ENCODE measurements at regions of chr14 and their contacts with region 1.

Region 1: GRCh38 chr14:103500148-103500990 is 22.3 kb downstream of the CKB start:
- DNase-seq: peak; percentile 87 to 98 (median 96)
- H3K4me3 ChIP-seq: no peak overlapping the region
- H3K27ac ChIP-seq: peak overlapping the region in 2 of 5 donors; percentile 19 to 48
- H3K4me1 ChIP-seq: peaks cover 0 to 16% of the 10 kb centered on the region in 2 donors
- H3K27me3 ChIP-seq: no peaks in the 10 kb centered on the region
- CTCF ChIP-seq: peak; percentile 81 to 96 (median 88)
- POLR2A ChIP-seq: no peak

Region 2: GRCh38 chr14:103333754-103334643 is 166.4 kb before region 1 on chr14 and contains the start of gene EIF5:
- intact Hi-C with region 1: loop called in 1 of 2 experiments (anchors 10 kb)
- DNase-seq: peak; percentile 99 to 100 (median 100)
- H3K4me3 ChIP-seq: peak within 1 kb of the TSS; percentile 88 to 98 (median 96)
- H3K27ac ChIP-seq: peak within 1 kb of the TSS; percentile 98 to 100 (median 99)
- H3K4me1 ChIP-seq: peaks cover 16 to 31% of the 10 kb centered on the region in 2 donors
- H3K27me3 ChIP-seq: no peaks in the 10 kb centered on the region
- CTCF ChIP-seq: peak in 4 of 6 experiments; percentile 55 to 77 (median 69)
- POLR2A ChIP-seq: peak; percentile 99 to 100
- total RNA-seq, gene EIF5: 165 to 555 (median 245) TPM

Region 3: DNA sequence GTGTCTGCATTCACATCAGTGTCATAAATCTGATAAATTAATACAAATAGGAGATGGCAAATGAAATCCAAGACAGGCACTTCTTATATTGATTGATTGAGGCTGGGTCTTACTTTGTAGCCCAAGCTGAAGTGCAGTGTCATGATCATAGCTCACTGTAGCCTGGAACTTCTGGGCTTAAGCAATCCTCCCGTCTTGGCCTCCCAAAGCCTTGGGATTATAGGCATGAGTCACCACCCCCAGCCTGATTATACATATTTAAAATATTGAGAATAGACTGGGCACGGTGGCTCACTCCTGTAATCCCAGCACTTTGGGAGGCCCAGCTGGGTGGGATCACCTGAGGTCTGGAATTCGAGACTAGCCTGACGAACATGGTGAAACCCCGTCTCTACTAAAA is 63.8 kb before region 1 on chr14:
- intact Hi-C with region 1: loop called in 1 of 2 experiments (anchors 10 kb)
- DNase-seq: no peak
- H3K4me3 ChIP-seq: no peak overlapping the region
- H3K27ac ChIP-seq: no peak overlapping the region
- H3K4me1 ChIP-seq: no peaks in the 10 kb centered on the region
- H3K27me3 ChIP-seq: no peaks in the 10 kb centered on the region
- CTCF ChIP-seq: no peak
- POLR2A ChIP-seq: no peak

Region 4: DNA sequence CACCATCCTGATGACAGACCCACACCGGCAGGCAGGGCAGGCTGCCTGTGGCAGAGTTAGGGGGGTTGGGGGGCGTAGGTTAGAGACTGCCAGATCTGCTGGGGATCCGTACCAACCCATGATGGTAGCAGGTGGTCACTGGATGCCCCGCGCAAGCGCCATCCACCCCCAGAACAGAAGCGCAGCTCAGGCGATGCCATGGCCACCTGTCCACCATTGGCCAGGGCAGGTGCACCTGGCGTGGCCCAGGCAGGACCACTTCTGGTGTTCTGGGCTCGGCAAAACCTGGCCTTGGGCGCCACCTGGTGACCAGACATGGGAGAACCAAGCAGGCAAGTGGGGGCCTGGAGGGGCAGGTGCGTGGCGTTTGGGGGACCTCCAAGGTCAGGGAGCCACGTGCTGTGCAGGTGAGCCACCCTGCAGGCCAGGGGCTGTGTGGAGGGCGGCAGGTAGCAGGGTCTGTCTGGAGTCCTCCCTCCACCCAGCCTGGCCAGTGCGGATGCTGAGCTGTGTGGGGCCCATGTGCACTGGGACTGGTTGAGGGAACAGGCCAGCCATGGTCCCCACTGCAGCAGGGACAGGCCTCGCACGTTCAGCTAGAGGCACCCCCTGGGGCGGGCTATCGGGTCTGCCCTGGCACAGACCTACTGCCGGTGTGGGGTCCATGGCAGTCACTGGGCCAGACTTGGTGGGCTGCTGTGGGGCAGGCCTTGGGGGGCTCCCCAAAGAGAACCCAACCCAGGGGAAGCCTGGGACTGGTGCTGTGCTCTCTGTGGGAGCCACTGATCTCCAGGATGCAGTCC is 46.5 kb after region 1 on chr14:
- intact Hi-C with region 1: loop called (anchors 2 to 5 kb)
- DNase-seq: peak; percentile 63 to 87 (median 73)
- H3K4me3 ChIP-seq: no peak overlapping the region
- H3K27ac ChIP-seq: no peak overlapping the region
- H3K4me1 ChIP-seq: peaks cover 21 to 44% of the 10 kb centered on the region in 2 donors
- H3K27me3 ChIP-seq: no peaks in the 10 kb centered on the region
- CTCF ChIP-seq: peak; percentile 66 to 96 (median 92)
- POLR2A ChIP-seq: no peak